Activated CD4-positive, alpha-beta T cell treated with anti-CD3 and anti-CD28 coated beads for 36 hours (primary cell): ENCODE measurements at regions of chr4 and their contacts with region 1.

Region 1: DNA sequence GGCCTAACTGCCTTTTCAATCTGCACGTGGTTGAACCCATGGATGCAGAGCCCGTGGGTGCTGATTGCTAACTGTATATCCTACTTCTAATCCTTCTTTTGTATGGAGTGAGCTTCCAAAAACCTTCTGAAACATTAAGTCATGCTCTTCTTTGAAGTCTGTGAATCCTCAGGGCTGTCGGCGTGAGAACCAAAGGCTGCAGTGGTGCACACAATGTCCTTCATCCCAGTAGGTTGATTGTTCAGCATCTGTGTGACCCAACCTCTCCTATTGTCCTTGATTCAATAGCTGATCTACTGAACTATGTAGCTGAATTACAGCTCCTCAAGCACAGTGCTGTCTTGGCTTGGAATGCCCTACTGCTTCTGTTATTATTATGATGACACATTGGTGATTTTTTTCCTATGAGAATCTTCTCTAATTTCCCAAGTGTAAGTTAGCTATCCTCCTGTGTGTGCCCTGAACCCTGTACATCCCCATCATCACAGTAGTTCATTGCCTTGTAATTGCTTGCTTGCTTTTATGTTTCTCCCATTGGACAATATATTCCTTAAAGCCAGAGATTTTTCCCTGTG is 294.6 kb downstream of the TRIML1 start:
- DNase-seq: no peak
- ATAC-seq: no peak
- H3K4me3 Mint-ChIP-seq: no peak overlapping the region
- H3K27ac Mint-ChIP-seq: no peak overlapping the region
- H3K4me1 Mint-ChIP-seq: no peaks in the 10 kb centered on the region
- H3K27me3 Mint-ChIP-seq: no peaks in the 10 kb centered on the region

Region 2: DNA sequence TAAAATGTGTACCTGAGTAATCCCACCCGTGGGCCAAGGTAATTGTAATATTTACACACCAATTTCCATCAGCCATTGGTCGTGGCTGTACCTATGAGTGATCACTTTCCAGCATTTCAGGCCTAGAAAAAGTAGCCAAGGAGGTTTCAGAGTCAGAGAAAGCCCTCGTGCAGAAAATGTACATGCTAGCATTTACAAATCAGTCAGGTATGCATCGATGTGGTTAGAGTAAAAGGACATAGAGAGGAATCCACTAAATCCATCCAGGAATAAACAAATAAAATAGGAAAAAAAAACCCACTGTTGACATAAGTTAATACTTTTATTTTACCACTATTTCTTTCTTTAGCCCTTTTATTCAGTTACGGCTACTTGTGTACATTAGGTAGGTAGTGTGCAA is 37.8 kb before region 1 on chr4:
- CTCF ChIA-PET with region 1: no interaction called
- POLR2A ChIA-PET with region 1: no interaction called
- intact Hi-C with region 1: loop called in 1 of 2 experiments (anchors 2 kb)
- DNase-seq: no peak
- ATAC-seq: no peak
- H3K4me3 Mint-ChIP-seq: no peak overlapping the region
- H3K27ac Mint-ChIP-seq: no peak overlapping the region
- H3K4me1 Mint-ChIP-seq: no peaks in the 10 kb centered on the region
- H3K27me3 Mint-ChIP-seq: no peaks in the 10 kb centered on the region

Region 3: GRCh38 chr4:188719794-188720193 is 286.0 kb after region 1 on chr4:
- CTCF ChIA-PET with region 1: no interaction called
- POLR2A ChIA-PET with region 1: no interaction called
- intact Hi-C with region 1: no loop called
- DNase-seq: no peak
- ATAC-seq: no peak
- H3K4me3 Mint-ChIP-seq: no peak overlapping the region
- H3K27ac Mint-ChIP-seq: no peak overlapping the region
- H3K4me1 Mint-ChIP-seq: no peaks in the 10 kb centered on the region
- H3K27me3 Mint-ChIP-seq: no peaks in the 10 kb centered on the region

Region 4: GRCh38 chr4:189502841-189503440 is 1069.1 kb after region 1 on chr4:
- CTCF ChIA-PET with region 1: no interaction called
- POLR2A ChIA-PET with region 1: no interaction called
- intact Hi-C with region 1: no loop called
- DNase-seq: peak; percentile 15
- ATAC-seq: peak; percentile 53
- H3K4me3 Mint-ChIP-seq: no peak overlapping the region
- H3K27ac Mint-ChIP-seq: no peak overlapping the region
- H3K4me1 Mint-ChIP-seq: no peaks in the 10 kb centered on the region
- H3K27me3 Mint-ChIP-seq: peaks cover 5% of the 10 kb centered on the region